Panc1 (cell line): ENCODE measurements at regions of chr5 and their contacts with region 1.

Region 1: GRCh38 chr5:150155258-150156026 is at the start of gene PDGFRB:
- DNase-seq: no peak
- ATAC-seq: peak; percentile 71
- H3K4me3 ChIP-seq: peak within 1 kb of the TSS; percentile 37 to 42
- H3K27ac ChIP-seq: no peak within 1 kb of the TSS
- H3K4me1 ChIP-seq: peaks cover 8% of the 10 kb centered on the region
- H3K27me3 ChIP-seq: no peaks in the 10 kb centered on the region
- CTCF ChIP-seq: no peak
- total RNA-seq, gene PDGFRB: 1.8 TPM

Region 2: DNA sequence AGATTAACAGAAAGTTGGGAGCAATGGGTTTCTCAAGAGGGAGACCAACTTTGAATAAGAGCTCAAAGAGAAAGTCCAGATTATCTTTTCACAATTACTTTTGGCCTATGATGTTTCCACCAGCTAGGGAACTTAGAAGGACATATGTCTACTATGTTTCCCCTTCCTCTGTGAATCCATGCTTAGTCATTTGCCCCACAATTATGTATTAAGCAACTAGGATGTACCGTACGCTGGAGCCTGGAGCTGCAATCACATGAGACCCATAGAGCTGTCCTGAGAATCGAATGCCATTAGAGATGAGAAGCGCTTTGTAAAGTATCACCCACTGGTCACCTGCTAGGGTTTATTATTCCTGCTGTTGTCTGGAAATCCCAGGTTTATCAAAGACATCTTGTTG is 289.7 kb before region 1 on chr5:
- CTCF ChIA-PET with region 1: no interaction called
- POLR2A ChIA-PET with region 1: no interaction called
- in situ Hi-C with region 1: no loop called
- intact Hi-C with region 1: no loop called
- DNase-seq: no peak
- ATAC-seq: no peak
- H3K4me3 ChIP-seq: no peak overlapping the region
- H3K27ac ChIP-seq: no peak overlapping the region
- H3K4me1 ChIP-seq: 0 out of 2 replicates have a peak, but pooled peaks cover 4% of the 10 kb centered on the region
- H3K27me3 ChIP-seq: no peaks in the 10 kb centered on the region
- CTCF ChIP-seq: no peak

Region 3: DNA sequence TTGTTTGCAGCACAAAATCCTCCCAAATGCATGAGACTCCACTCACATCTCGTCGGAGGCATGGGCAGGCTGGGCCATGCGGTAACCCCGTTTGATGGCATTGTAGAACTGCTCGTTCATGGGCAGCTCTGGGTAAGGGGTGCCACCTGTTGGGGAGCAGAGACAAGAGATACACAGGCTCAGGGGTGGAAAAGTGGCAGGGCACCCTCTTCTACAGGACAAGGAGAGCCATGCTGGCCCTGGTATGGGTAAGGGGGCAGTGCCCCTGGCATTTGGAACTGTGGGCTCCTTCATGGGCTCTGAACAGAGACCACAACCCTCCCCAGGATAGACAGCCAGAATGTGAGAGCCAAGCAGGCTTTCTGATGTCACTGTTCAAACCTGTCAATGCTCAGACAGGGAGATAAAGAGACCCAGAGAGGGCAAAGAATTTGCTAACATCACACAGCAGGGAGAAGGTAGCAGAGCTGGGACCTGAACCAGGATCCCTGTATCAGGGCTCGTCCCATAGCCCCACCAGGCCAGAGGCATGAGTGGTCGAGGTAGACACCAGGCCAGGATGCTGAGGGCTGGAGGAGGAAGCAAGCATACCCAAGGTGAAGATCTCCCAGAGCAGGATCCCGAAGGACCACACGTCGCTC is 35.9 kb before region 1 on chr5:
- CTCF ChIA-PET with region 1: no interaction called
- POLR2A ChIA-PET with region 1: interaction called, 10 read pairs
- in situ Hi-C with region 1: no loop called
- intact Hi-C with region 1: no loop called
- DNase-seq: no peak
- ATAC-seq: no peak
- H3K4me3 ChIP-seq: no peak overlapping the region
- H3K27ac ChIP-seq: no peak overlapping the region
- H3K4me1 ChIP-seq: peaks cover 7% of the 10 kb centered on the region
- H3K27me3 ChIP-seq: no peaks in the 10 kb centered on the region
- CTCF ChIP-seq: no peak

Region 4: DNA sequence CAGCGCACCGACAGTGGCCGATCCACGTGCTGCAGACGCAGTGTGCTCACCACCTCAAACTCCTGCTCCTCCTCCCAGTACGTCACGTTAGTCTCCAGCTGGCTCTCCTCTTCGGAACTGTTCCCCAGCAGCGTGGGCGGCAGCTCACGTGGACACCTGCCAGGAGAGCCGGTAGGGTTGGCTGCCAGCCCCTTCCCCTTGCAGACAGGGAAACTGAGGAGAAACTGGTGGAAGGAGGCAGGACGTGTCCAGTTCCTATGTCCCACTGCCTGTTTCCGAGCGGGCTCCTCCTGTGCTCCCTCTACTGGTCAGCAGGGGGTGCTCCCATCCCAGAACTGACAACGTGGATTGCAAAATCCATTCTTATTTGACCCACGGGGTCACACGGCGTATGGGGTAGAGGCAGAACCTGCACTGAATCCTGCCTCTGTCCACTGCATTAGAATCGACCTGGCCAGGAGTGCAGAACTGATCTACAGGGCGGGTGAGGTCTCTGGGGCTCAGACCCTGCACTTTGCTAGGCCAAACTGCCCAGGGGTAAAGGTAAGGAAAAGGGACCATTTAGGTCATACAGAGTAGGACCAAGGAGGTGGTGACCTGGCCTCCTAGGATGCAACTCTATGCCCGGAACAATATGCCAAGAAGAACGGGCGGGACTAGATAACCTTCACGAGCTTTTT is 25.5 kb before region 1 on chr5:
- CTCF ChIA-PET with region 1: no interaction called
- POLR2A ChIA-PET with region 1: no interaction called
- in situ Hi-C with region 1: no loop called
- intact Hi-C with region 1: no loop called
- DNase-seq: peak; percentile 60
- ATAC-seq: peak; percentile 88
- H3K4me3 ChIP-seq: peak overlapping the region; percentile 24 to 48
- H3K27ac ChIP-seq: 0 out of 2 replicates have a peak overlapping the region, but pooled peaks have one; percentile 11
- H3K4me1 ChIP-seq: peaks cover 7% of the 10 kb centered on the region
- H3K27me3 ChIP-seq: no peaks in the 10 kb centered on the region
- CTCF ChIP-seq: peak; percentile 96